Endothelial cell of umbilical vein (primary cell): ENCODE measurements at regions of chr1 and their contacts with region 1.

Region 1: GRCh38 chr1:205061665-205062069 is 18.7 kb downstream of the CNTN2 start:
- DNase-seq: peak; percentile 71
- H3K4me3 ChIP-seq: no peak overlapping the region
- H3K27ac ChIP-seq: no peak overlapping the region
- H3K4me1 ChIP-seq: no peaks in the 10 kb centered on the region
- H3K27me3 ChIP-seq: peaks cover 0 to 2% of the 10 kb centered on the region in 2 experiments
- CTCF ChIP-seq: peak; percentile 80 to 89
- POLR2A ChIP-seq: no peak

Region 2: DNA sequence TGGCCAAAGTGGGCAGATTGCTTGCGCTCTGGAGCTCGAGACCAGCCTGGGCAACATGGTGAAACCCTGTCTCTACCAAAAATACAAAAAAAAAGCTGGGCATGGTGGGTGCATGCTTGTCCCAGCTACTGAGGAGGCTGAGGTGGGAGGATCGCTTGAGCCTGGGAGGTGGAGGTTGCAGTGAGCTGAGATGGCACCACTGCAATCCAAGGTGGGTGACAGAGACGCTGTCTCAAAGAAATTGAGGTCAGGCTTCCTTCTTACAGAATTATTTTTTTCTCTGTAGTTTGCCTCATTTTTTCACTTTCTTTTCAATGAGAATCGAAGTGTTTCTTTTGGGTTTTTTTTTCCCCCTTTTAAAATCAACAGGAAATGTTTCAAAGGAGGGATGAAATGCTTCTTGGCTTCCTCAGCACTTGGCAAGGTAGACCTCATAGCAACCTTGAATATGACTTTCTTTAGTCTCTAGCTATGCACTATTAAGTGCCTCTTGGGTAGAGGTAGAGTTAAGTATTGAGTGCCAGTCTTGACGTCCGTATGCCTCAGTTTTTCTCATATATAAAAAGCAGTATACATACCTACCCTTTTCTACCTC is 505.1 kb before region 1 on chr1:
- CTCF ChIA-PET with region 1: no interaction called
- POLR2A ChIA-PET with region 1: no interaction called
- dilution Hi-C with region 1: no loop called
- intact Hi-C with region 1: no loop called
- DNase-seq: no peak
- H3K4me3 ChIP-seq: no peak overlapping the region
- H3K27ac ChIP-seq: no peak overlapping the region
- H3K4me1 ChIP-seq: no peaks in the 10 kb centered on the region
- H3K27me3 ChIP-seq: no peaks in the 10 kb centered on the region
- CTCF ChIP-seq: no peak
- POLR2A ChIP-seq: no peak

Region 3: GRCh38 chr1:204941421-204942338 is 120.0 kb before region 1 on chr1:
- CTCF ChIA-PET with region 1: interaction called, 15 read pairs
- POLR2A ChIA-PET with region 1: no interaction called
- dilution Hi-C with region 1: no loop called
- intact Hi-C with region 1: no loop called
- DNase-seq: peak; percentile 63
- H3K4me3 ChIP-seq: no peak overlapping the region
- H3K27ac ChIP-seq: no peak overlapping the region
- H3K4me1 ChIP-seq: no peaks in the 10 kb centered on the region
- H3K27me3 ChIP-seq: peaks cover 5 to 10% of the 10 kb centered on the region in 2 experiments
- CTCF ChIP-seq: peak; percentile 78 to 86
- POLR2A ChIP-seq: no peak

Region 4: DNA sequence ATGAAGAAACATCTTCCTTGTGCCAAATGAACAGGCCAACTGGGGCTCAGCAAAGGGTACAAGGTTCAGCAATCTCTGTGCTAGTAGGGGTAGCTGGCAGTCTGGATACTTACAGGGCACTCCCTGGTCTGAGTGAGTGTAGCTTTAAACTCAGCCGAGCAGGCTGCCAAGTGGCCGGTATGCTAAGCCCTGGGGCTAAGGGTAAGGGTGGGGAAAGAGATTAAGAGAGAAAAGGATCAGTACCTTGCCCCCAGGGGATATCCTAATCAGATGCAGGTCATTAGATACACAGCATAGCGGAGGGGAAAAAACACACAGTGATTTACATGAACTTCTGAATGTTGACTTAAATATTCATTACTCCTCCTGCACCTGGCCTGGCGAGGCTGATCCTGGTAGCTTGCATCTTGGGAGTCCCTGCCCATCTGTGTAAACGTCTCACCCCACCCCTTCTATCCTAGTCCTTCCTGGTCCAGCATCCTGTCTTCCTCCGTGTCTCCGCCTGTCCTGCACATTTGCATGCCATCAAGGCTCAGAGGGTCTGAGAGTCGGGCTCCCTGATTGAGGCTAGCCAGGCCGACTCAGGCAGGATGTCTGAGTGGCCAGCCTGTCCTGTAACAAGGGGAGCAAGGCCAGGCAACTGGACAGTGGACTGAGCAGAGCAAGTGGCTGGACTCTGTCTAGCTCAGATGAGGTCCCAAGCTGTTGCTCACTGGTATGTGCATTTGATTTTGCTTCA is 58.1 kb before region 1 on chr1:
- CTCF ChIA-PET with region 1: interaction called, 30 read pairs
- POLR2A ChIA-PET with region 1: no interaction called
- dilution Hi-C with region 1: no loop called
- intact Hi-C with region 1: no loop called
- DNase-seq: no peak
- H3K4me3 ChIP-seq: no peak overlapping the region
- H3K27ac ChIP-seq: no peak overlapping the region
- H3K4me1 ChIP-seq: no peaks in the 10 kb centered on the region
- H3K27me3 ChIP-seq: peaks cover 2 to 3% of the 10 kb centered on the region in 2 experiments
- CTCF ChIP-seq: no peak
- POLR2A ChIP-seq: no peak

Region 5: GRCh38 chr1:205037539-205037938 is 24.1 kb before region 1 on chr1:
- CTCF ChIA-PET with region 1: interaction called, 24 read pairs
- POLR2A ChIA-PET with region 1: no interaction called
- dilution Hi-C with region 1: no loop called
- intact Hi-C with region 1: no loop called
- DNase-seq: no peak
- H3K4me3 ChIP-seq: no peak overlapping the region
- H3K27ac ChIP-seq: no peak overlapping the region
- H3K4me1 ChIP-seq: no peaks in the 10 kb centered on the region
- H3K27me3 ChIP-seq: peaks cover 11 to 17% of the 10 kb centered on the region in 2 experiments
- CTCF ChIP-seq: no peak
- POLR2A ChIP-seq: no peak

Region 6: DNA sequence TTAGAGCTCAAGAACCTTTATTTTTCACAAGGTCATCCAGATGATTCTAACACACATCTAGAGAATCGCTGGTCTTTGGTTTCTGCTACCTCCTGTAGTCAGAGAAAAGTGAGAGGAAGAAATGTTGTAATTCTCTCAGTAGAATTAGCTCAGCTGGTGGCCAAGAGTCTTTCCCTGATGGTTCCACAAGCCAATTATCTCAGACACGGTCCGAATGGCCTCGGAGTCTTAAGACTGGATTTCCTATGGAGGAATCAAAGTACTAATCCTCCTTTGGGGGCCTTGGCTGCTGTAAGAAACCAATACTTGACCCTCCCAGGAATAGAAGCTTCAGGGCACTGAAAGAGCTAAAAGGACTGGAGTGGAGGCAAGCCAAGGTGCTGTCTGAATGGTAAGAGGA is 20.8 kb after region 1 on chr1:
- CTCF ChIA-PET with region 1: interaction called, 63 read pairs
- POLR2A ChIA-PET with region 1: no interaction called
- dilution Hi-C with region 1: no loop called
- intact Hi-C with region 1: no loop called
- DNase-seq: no peak
- H3K4me3 ChIP-seq: no peak overlapping the region
- H3K27ac ChIP-seq: no peak overlapping the region
- H3K4me1 ChIP-seq: no peaks in the 10 kb centered on the region
- H3K27me3 ChIP-seq: no peaks in the 10 kb centered on the region
- CTCF ChIP-seq: no peak
- POLR2A ChIP-seq: no peak

Region 7: DNA sequence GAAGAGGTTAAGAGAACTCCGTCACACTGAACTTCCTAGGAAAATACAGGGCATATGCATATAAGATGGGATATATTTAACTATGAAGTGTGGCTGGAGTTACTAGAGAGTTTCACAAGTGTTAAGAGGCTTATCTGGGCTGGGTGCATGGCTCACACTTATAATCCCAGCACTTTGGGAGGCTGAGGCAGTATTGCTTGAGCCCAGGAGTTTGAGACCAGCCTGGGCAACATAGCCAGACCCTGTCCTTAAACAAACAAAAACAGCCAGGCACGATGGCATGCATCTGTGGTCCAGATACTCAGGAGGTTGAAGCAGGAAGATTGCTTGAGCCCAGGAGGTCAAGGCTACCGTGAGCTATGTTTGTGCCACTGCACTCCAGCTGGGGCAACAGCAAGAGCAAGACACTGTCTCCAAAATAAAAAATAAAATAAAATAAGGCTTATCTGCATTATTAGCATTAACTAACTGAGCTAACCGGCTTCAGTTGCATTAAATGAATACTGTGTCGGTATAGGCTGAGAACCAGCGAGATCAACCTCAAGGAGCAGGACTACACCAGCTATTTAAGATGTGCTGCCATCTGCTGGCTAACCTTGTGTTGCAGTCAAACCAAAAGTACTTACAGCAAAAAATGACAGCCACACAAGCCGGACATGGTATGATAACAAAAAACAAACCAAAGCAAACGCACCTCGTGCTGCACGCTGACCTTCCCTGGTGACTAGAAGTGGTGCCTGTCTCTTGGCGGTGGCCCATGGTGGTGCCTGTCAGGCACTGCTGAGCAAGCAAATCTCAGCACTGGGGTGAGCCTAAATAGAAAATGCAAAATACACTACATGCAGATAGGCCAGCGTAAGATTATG is 79.8 kb after region 1 on chr1:
- CTCF ChIA-PET with region 1: interaction called, 12 read pairs
- POLR2A ChIA-PET with region 1: no interaction called
- dilution Hi-C with region 1: no loop called
- intact Hi-C with region 1: no loop called
- DNase-seq: peak; percentile 84
- H3K4me3 ChIP-seq: no peak overlapping the region
- H3K27ac ChIP-seq: no peak overlapping the region
- H3K4me1 ChIP-seq: peaks cover 19% of the 10 kb centered on the region
- H3K27me3 ChIP-seq: no peaks in the 10 kb centered on the region
- CTCF ChIP-seq: peak; percentile 77
- POLR2A ChIP-seq: no peak